PC-3 (cell line): ENCODE measurements at regions of chr4 and their contacts with region 1.

Region 1: DNA sequence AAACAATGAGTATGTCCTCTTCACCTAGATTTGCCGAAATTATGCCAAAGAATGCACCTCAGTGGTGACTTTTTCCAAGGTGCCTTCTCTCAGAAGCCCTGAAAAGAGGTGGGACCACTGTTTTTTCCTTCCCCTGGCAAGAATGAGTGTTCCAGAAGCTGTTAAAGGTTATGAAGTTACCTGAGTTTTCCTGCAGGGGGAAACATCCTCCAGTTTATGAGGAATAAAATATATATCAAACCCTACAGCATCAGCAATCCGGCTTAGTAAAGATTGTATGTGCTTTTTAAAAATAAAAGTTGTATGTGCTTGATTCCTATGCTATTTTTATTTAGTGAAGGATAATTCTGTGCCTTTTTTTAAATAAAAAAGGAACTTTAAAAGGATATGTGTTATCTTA is 73.3 kb downstream of the RBM46 start:
- DNase-seq: peak; percentile 55
- ATAC-seq: peak; percentile 43
- H3K4me3 ChIP-seq: no peak overlapping the region
- H3K27ac ChIP-seq: no peak overlapping the region
- H3K4me1 ChIP-seq: no peaks in the 10 kb centered on the region
- H3K27me3 ChIP-seq: no peaks in the 10 kb centered on the region
- CTCF ChIP-seq: peak; percentile 57

Region 2: GRCh38 chr4:154911097-154911496 is 56.7 kb after region 1 on chr4:
- CTCF ChIA-PET with region 1: no interaction called
- POLR2A ChIA-PET with region 1: no interaction called
- intact Hi-C with region 1: loop called (anchors 5 kb)
- DNase-seq: peak; percentile 34
- ATAC-seq: no peak
- H3K4me3 ChIP-seq: no peak overlapping the region
- H3K27ac ChIP-seq: no peak overlapping the region
- H3K4me1 ChIP-seq: peaks cover 12% of the 10 kb centered on the region
- H3K27me3 ChIP-seq: no peaks in the 10 kb centered on the region
- CTCF ChIP-seq: peak; percentile 46

Region 3: GRCh38 chr4:154928640-154929257 is 74.4 kb after region 1 on chr4:
- CTCF ChIA-PET with region 1: interaction called, 4 read pairs
- POLR2A ChIA-PET with region 1: no interaction called
- intact Hi-C with region 1: loop called (anchors 1 kb)
- DNase-seq: peak; percentile 58
- ATAC-seq: peak; percentile 71
- H3K4me3 ChIP-seq: no peak overlapping the region
- H3K27ac ChIP-seq: no peak overlapping the region
- H3K4me1 ChIP-seq: no peaks in the 10 kb centered on the region
- H3K27me3 ChIP-seq: no peaks in the 10 kb centered on the region
- CTCF ChIP-seq: peak; percentile 74